ENCODE measurements at regions of chr6 and their contacts with region 1.

Region 1: DNA sequence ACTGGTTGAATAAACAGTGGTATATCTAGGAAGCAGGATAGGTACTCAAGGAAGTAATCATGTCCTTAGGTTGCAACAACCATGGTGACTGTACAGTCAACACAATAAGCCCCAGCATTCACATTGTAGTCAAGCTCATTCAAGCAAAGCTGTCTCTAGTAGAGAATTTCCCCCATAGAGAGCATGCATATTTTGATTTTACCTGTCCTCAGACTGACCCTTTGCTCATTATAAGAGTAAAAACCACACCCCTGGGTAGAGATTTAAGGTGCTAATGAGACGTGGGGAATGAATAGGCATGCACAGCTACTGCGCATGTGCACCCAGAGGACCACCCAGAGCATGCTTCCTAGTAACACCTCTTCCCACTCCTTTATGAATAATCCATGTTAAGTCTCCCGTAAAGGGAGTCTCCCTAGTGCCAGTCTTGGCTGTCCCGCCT is 6.1 kb upstream of the RNF8 start:
- DNase-seq: no peak
- ATAC-seq: no peak
- H3K4me3 ChIP-seq: no peak overlapping the region
- H3K4me3 Mint-ChIP-seq: no peak overlapping the region
- H3K27ac ChIP-seq: no peak overlapping the region
- H3K27ac Mint-ChIP-seq: no peak overlapping the region
- H3K4me1 ChIP-seq: no peaks in the 10 kb centered on the region
- H3K4me1 Mint-ChIP-seq: peaks cover 2% of the 10 kb centered on the region
- H3K27me3 ChIP-seq: no peaks in the 10 kb centered on the region
- H3K27me3 Mint-ChIP-seq: peaks cover 10% of the 10 kb centered on the region
- CTCF ChIP-seq: no peak

Region 2: GRCh38 chr6:37262446-37263026 is 85.2 kb before region 1 on chr6:
- CTCF ChIA-PET with region 1: no interaction called
- POLR2A ChIA-PET with region 1: no interaction called
- intact Hi-C with region 1: no loop called
- DNase-seq: no peak
- ATAC-seq: no peak
- H3K4me3 ChIP-seq: no peak overlapping the region
- H3K4me3 Mint-ChIP-seq: no peak overlapping the region
- H3K27ac ChIP-seq: no peak overlapping the region
- H3K27ac Mint-ChIP-seq: no peak overlapping the region
- H3K4me1 ChIP-seq: peaks cover 18% of the 10 kb centered on the region
- H3K4me1 Mint-ChIP-seq: peaks cover 54% of the 10 kb centered on the region
- H3K27me3 ChIP-seq: no peaks in the 10 kb centered on the region
- H3K27me3 Mint-ChIP-seq: no peaks in the 10 kb centered on the region
- CTCF ChIP-seq: no peak

Region 3: DNA sequence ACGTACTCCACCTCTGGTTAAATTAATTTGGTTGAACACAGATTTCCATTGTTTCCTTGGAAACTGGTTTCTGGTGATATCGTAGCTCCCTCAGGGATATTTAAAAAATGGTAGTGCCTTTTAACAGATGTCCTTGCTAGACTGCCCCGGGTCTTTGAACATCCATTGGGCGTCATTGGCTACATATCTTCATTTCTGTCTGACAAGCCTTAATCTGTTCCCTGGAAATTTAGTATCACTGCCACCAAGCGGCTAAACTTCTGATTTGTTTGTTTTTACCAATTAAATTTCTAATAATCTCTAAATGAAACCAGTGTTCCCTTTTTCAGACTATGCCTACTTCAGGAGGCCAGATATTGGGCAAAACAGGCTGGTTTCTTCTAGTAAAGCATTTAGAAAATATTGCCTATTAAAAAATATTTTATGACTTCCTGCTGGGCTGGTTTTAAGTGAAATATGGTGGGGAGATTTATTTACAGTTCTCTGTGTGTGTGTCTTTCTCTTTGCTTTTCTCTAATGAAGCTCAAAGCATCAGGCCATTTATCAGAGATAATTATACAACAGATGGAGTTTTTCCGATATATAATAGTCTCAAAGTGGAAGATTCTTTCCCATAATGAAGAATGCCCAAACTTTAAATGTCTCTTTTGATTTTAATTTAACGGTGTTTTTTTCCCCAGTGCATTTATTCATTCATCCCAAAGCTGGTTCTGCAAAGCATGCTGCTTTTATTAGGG is 721.3 kb after region 1 on chr6:
- CTCF ChIA-PET with region 1: no interaction called
- POLR2A ChIA-PET with region 1: no interaction called
- intact Hi-C with region 1: loop called in 1 of 2 experiments (anchors 5 kb)
- DNase-seq: no peak
- ATAC-seq: no peak
- H3K4me3 ChIP-seq: no peak overlapping the region
- H3K4me3 Mint-ChIP-seq: no peak overlapping the region
- H3K27ac ChIP-seq: no peak overlapping the region
- H3K27ac Mint-ChIP-seq: no peak overlapping the region
- H3K4me1 ChIP-seq: no peaks in the 10 kb centered on the region
- H3K4me1 Mint-ChIP-seq: peaks cover 22% of the 10 kb centered on the region
- H3K27me3 ChIP-seq: no peaks in the 10 kb centered on the region
- H3K27me3 Mint-ChIP-seq: no peaks in the 10 kb centered on the region
- CTCF ChIP-seq: no peak